ENCODE measurements at regions of chr20 and their contacts with region 1.

Region 1: DNA sequence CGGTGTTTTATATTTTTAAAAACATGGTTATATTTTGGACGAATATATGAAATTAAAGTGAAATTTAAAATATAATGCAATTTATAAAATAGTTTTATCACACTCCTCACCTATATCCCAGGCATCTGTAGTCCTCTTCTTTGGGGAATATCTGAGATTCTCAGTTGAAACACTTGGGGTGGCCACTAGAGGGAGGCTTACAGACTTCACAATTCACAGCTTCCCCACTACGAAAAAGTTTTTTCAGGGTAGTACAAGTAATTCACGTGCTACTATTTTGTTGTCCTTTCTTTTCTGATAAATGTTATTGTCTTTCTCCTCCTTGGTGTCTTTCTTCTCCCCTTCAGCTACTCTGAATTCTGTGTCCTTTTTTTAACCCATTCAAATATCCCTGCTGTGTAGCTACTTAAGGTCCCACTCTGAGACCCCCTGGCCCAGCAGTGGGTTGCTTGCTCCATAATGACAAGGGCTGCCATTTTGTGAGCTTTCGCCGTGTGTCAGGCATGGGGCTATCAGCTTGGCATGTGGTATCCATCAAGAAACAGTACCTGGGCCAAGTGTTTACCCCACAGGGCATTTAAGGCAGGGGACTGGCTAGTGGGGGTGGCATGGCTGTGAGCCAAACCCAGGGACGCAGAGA is 43.6 kb upstream of the PHACTR3 start:
- DNase-seq: no peak
- H3K4me3 Mint-ChIP-seq: no peak overlapping the region
- H3K27ac Mint-ChIP-seq: no peak overlapping the region
- H3K4me1 Mint-ChIP-seq: peaks cover 4% of the 10 kb centered on the region
- H3K27me3 Mint-ChIP-seq: peaks cover 3% of the 10 kb centered on the region

Region 2: DNA sequence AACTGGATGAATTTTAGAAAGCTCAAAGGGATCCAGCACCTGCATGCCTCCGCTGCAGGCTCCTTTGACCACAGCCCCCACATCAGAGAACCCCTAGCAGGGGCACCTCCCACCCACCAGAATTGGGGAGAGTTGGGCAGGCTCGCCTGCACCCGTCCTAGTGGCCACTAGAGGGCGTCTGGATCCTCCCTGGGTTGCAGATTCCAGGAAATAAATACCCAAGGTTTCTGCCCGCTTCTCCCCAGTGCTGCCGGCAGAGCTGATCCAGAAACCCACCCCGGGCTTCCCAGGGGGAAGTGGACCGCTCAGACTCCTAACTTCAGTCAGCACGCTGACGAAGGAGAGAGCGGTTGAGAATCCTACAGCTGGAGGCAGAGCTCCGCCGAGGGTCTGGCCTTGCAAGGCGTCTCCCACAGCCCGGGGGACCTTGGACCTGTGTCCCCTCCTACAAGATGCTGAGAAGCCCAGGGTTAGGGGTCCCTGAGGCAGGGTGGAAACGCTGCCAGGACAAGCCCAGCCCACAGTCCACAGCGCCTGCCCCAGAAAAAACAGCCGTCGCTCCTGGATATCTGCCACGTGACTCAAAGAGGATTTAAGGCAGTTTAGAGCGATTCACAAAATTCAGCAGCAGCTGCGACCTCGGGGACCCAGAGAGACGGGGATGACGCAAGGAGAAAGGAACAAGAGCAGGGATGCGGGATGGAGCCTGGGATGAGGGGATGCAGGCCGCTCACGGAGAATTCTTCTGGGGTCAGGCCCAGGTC is 11.0 kb after region 1 on chr20:
- CTCF ChIA-PET with region 1: interaction called, 21 read pairs
- POLR2A ChIA-PET with region 1: no interaction called
- DNase-seq: peak; percentile 54
- H3K4me3 Mint-ChIP-seq: no peak overlapping the region
- H3K27ac Mint-ChIP-seq: no peak overlapping the region
- H3K4me1 Mint-ChIP-seq: no peaks in the 10 kb centered on the region
- H3K27me3 Mint-ChIP-seq: peaks cover 19% of the 10 kb centered on the region

Region 3: GRCh38 chr20:59583428-59584045 is 22.8 kb after region 1 on chr20:
- CTCF ChIA-PET with region 1: no interaction called
- POLR2A ChIA-PET with region 1: no interaction called
- DNase-seq: no peak
- H3K4me3 Mint-ChIP-seq: no peak overlapping the region
- H3K27ac Mint-ChIP-seq: no peak overlapping the region
- H3K4me1 Mint-ChIP-seq: peaks cover 9% of the 10 kb centered on the region
- H3K27me3 Mint-ChIP-seq: peaks cover 11% of the 10 kb centered on the region

Region 4: GRCh38 chr20:60024801-60025200 is 464.1 kb after region 1 on chr20:
- CTCF ChIA-PET with region 1: no interaction called
- POLR2A ChIA-PET with region 1: no interaction called
- DNase-seq: no peak
- H3K4me3 Mint-ChIP-seq: no peak overlapping the region
- H3K27ac Mint-ChIP-seq: no peak overlapping the region
- H3K4me1 Mint-ChIP-seq: peaks cover 2% of the 10 kb centered on the region
- H3K27me3 Mint-ChIP-seq: no peaks in the 10 kb centered on the region